ENCODE measurements at regions of chr20 and their contacts with region 1.

Region 1: DNA sequence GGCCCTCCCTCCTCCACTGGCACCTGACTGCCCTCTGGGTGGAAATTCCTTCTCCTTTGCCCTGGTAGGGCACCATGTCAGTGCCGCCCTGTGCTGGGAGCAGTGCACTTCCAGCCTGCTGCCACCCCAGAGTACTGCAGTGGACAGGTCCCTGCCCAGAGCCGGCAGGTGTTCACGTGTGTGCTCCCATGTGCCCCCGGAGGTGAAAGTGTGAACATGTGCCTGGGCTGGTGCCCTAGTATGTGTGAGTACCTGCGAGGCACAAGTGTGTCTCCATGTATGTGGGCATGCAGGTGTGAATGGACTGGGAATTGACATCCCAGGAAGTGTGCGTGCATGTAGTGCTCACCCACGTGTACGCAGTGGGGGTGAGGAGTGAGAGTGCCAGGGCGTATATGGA is 29.4 kb downstream of the SDCBP2 start:
- DNase-seq: no peak
- H3K4me3 ChIP-seq: no peak overlapping the region
- H3K27ac ChIP-seq: no peak overlapping the region
- H3K4me1 ChIP-seq: peaks cover 0 to 10% (median 4%) of the 10 kb centered on the region in 4 experiments; a peak in 6 of 7 replicates
- H3K27me3 ChIP-seq: no peaks in the 10 kb centered on the region
- CTCF ChIP-seq: peak; percentile 47 to 68 (median 59)
- EP300 ChIP-seq: no peak
- POLR2A ChIP-seq: no peak
- RAD21 ChIP-seq: peak; percentile 22 to 43; a peak in 3 of 4 replicates

Region 2: DNA sequence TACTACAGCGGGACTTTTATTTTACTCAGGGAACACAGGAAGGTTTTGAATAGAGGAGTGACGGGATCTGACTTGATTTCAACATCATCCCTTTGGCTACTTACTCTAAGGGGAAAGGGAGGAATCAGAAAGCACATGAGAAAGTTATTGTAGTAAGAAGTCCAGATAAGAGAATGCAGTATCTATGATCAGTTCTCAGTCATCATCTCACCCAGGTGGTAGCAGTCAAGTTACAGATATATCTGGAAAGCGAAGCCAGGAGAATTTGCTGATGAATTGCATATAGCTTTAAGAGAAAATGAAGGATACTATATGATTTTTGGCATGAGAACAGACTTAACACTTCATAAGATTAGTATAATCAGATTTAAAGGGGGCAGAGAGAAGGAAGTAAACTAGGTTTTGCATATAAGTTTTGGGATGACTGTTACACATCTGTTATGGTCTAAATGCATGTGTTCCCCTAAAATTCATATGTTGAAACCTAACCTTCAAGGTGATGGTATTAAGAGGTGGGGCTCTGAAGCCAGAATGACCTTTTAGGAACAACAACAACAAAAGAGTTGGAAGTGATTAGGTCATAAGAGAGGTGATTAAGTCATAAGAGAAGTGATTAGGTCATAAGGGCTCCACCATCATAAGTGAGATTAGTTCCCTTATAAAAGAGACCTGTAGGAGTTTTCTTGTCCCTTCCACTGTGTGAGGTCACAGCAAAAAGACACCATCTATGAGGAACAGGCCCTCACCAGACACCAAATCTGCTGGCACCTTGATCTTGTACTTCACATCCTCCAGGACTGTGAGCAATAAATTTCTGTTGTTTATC is 67.0 kb before region 1 on chr20:
- CTCF ChIA-PET with region 1: no interaction called
- POLR2A ChIA-PET with region 1: no interaction called
- DNase-seq: no peak
- H3K4me3 ChIP-seq: no peak overlapping the region
- H3K27ac ChIP-seq: no peak overlapping the region
- H3K4me1 ChIP-seq: no peaks in the 10 kb centered on the region
- H3K27me3 ChIP-seq: peaks cover 0 to 2% (median under 1%) of the 10 kb centered on the region in 4 experiments; a peak in 2 of 7 replicates
- CTCF ChIP-seq: no peak
- EP300 ChIP-seq: no peak
- POLR2A ChIP-seq: no peak
- RAD21 ChIP-seq: no peak

Region 3: DNA sequence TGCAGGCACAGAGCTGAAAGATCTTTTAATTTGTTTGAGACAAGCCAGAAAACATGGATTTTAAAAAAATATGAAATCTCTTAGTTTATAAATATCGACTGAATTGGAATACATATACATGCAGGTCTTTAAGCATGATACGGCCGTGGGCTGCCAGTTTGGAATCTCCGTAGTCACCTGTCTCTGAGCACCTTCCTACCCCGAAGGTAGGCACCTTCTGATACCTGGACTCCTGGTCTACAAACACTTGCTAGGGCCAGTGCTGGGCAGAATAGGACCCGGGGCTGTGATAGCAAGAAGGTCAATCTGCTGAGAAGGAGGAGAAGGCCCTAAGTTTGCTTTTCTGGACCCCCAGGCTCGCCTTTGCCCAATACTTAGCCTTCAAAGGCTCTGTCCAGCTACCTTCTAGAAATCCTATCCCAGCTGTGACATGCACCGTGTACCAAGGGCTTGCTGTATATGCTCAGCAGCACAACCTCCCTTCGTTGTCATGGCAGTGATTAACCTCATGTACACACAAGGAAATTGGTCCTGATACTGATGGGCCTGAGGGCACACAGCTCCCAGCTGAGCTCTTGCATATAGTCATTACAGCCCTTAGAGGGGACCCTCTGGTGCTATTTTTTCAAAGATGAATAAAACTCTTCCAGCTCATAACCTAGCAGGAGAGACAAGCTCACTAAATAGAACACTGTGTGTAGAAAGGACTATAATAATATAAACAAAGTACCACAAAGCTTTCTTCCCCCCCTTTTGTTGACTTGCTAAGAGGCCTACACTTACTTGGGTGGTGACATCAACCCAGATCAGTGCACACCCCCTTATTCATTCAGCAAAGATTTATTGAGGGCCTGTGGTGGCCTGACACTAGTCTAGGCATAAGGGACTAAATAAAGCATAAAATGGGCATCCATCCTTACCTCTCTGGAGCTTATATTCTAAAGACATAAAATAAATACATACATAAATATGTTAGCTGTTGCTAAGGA is 15.7 kb before region 1 on chr20:
- CTCF ChIA-PET with region 1: interaction called, 11 read pairs
- POLR2A ChIA-PET with region 1: no interaction called
- DNase-seq: no peak
- H3K4me3 ChIP-seq: no peak overlapping the region
- H3K27ac ChIP-seq: no peak overlapping the region
- H3K4me1 ChIP-seq: 0 out of 7 replicates have a peak, but pooled peaks cover 0 to 2% (median under 1%) of the 10 kb centered on the region in 4 experiments
- H3K27me3 ChIP-seq: no peaks in the 10 kb centered on the region
- CTCF ChIP-seq: no peak
- EP300 ChIP-seq: no peak
- POLR2A ChIP-seq: no peak
- RAD21 ChIP-seq: no peak

Region 4: GRCh38 chr20:1313236-1313964 is 13.9 kb after region 1 on chr20:
- CTCF ChIA-PET with region 1: interaction called, 11 read pairs
- POLR2A ChIA-PET with region 1: interaction called, 3 read pairs
- DNase-seq: peak in 1 of 2 experiments; percentile 91
- H3K4me3 ChIP-seq: peak overlapping the region; percentile 34 to 73 (median 58)
- H3K27ac ChIP-seq: no peak overlapping the region
- H3K4me1 ChIP-seq: peaks cover 0 to 2% (median 0%) of the 10 kb centered on the region in 4 experiments; a peak in 4 of 7 replicates
- H3K27me3 ChIP-seq: peaks cover 0 to 12% (median 10%) of the 10 kb centered on the region in 4 experiments; a peak in 5 of 7 replicates
- CTCF ChIP-seq: peak; percentile 88 to 93 (median 92)
- EP300 ChIP-seq: no peak
- POLR2A ChIP-seq: no peak
- RAD21 ChIP-seq: peak; percentile 80 to 88